SK-N-SH (cell line): ENCODE measurements at regions of chr1 and their contacts with region 1.

Region 1: GRCh38 chr1:197180252-197180878 is 33.9 kb upstream of the ASPM start:
- DNase-seq: peak; percentile 38
- H3K4me3 ChIP-seq: no peak overlapping the region; a peak in 1 of 4 replicates
- H3K27ac ChIP-seq: peak overlapping the region in 1 of 2 experiments; percentile 10; a peak in 2 of 4 replicates
- H3K4me1 ChIP-seq: no peaks in the 10 kb centered on the region; a peak in 1 of 4 replicates
- H3K27me3 ChIP-seq: no peaks in the 10 kb centered on the region
- CTCF ChIP-seq: peak; percentile 84
- EP300 ChIP-seq: no peak
- RAD21 ChIP-seq: peak; percentile 80

Region 2: DNA sequence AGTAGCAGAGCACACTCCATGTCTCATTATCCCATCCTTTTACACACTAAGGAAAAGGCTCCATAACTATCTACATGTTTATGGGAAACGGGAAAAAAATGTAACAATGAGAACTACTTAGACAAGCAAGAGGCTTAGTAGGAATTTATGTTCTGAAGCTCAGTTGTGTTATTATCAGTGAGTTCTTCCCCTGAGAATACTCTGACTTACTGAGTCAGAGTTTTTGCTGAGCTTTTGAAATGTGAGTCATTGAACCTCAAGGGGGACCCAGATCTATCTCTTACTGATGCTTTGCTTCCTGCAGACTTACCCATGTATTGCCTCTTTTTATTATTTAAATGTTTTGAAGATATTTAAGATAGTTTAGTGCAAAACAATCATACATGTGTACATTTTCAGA is 182.9 kb before region 1 on chr1:
- CTCF ChIA-PET with region 1: no interaction called
- POLR2A ChIA-PET with region 1: no interaction called
- DNase-seq: no peak
- H3K4me3 ChIP-seq: no peak overlapping the region
- H3K27ac ChIP-seq: no peak overlapping the region
- H3K4me1 ChIP-seq: peaks cover 0 to under 1% of the 10 kb centered on the region in 2 experiments; a peak in 2 of 4 replicates
- H3K27me3 ChIP-seq: no peaks in the 10 kb centered on the region
- CTCF ChIP-seq: no peak
- EP300 ChIP-seq: no peak
- RAD21 ChIP-seq: no peak

Region 3: GRCh38 chr1:197195100-197195499 is 14.7 kb after region 1 on chr1:
- CTCF ChIA-PET with region 1: interaction called, 10 read pairs
- POLR2A ChIA-PET with region 1: no interaction called
- DNase-seq: no peak
- H3K4me3 ChIP-seq: peak overlapping the region in 1 of 2 experiments; percentile 39; a peak in 2 of 4 replicates
- H3K27ac ChIP-seq: peak overlapping the region in 1 of 2 experiments; percentile 68; a peak in 3 of 4 replicates
- H3K4me1 ChIP-seq: peaks cover 19 to 28% of the 10 kb centered on the region in 2 experiments; a peak in 2 of 4 replicates
- H3K27me3 ChIP-seq: no peaks in the 10 kb centered on the region
- CTCF ChIP-seq: no peak
- EP300 ChIP-seq: no peak
- RAD21 ChIP-seq: no peak

Region 4: DNA sequence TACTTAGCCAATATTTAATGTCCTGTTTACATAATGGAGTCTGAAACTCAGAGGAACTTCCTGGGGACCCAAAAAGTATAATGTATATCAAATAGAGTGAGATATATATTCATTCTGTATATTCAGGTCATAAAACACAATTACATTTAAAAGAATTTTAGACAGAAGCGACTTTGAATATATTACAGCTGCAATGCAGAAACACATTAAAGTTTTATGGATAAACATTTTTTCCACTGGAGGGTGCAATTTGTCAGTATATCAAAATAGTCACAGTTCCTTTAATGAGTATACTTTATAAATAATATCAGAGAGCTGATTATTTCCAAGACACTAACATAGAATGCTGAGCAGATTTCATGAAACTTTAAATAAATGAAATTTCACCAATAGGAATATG is 43.8 kb after region 1 on chr1:
- CTCF ChIA-PET with region 1: interaction called, 14 read pairs
- POLR2A ChIA-PET with region 1: no interaction called
- DNase-seq: peak; percentile 13
- H3K4me3 ChIP-seq: no peak overlapping the region
- H3K27ac ChIP-seq: no peak overlapping the region
- H3K4me1 ChIP-seq: peaks cover 0 to 10% of the 10 kb centered on the region in 2 experiments; a peak in 2 of 4 replicates
- H3K27me3 ChIP-seq: no peaks in the 10 kb centered on the region
- CTCF ChIP-seq: peak; percentile 63
- EP300 ChIP-seq: no peak
- RAD21 ChIP-seq: peak; percentile 52

Region 5: GRCh38 chr1:197314682-197315081 is 134.3 kb after region 1 on chr1:
- CTCF ChIA-PET with region 1: interaction called, 14 read pairs
- POLR2A ChIA-PET with region 1: no interaction called
- DNase-seq: no peak
- H3K4me3 ChIP-seq: no peak overlapping the region
- H3K27ac ChIP-seq: no peak overlapping the region
- H3K4me1 ChIP-seq: no peaks in the 10 kb centered on the region; a peak in 1 of 4 replicates
- H3K27me3 ChIP-seq: no peaks in the 10 kb centered on the region
- CTCF ChIP-seq: peak; percentile 23
- EP300 ChIP-seq: no peak
- RAD21 ChIP-seq: peak; percentile 15; the same call in 1 of the 2 replicates

Region 6: GRCh38 chr1:197327776-197328364 is 147.5 kb after region 1 on chr1:
- CTCF ChIA-PET with region 1: interaction called, 10 read pairs
- POLR2A ChIA-PET with region 1: no interaction called
- DNase-seq: peak; percentile 16
- H3K4me3 ChIP-seq: peak overlapping the region in 1 of 2 experiments; percentile 10; a peak in 1 of 4 replicates
- H3K27ac ChIP-seq: no peak overlapping the region
- H3K4me1 ChIP-seq: no peaks in the 10 kb centered on the region; a peak in 1 of 4 replicates
- H3K27me3 ChIP-seq: no peaks in the 10 kb centered on the region
- CTCF ChIP-seq: peak; percentile 79
- EP300 ChIP-seq: no peak
- RAD21 ChIP-seq: peak; percentile 67

Region 7: GRCh38 chr1:197356723-197357533 is 176.6 kb after region 1 on chr1:
- CTCF ChIA-PET with region 1: interaction called, 99 read pairs
- POLR2A ChIA-PET with region 1: no interaction called
- DNase-seq: peak; percentile 63
- H3K4me3 ChIP-seq: no peak overlapping the region
- H3K27ac ChIP-seq: no peak overlapping the region
- H3K4me1 ChIP-seq: no peaks in the 10 kb centered on the region; a peak in 1 of 4 replicates
- H3K27me3 ChIP-seq: no peaks in the 10 kb centered on the region
- CTCF ChIP-seq: peak; percentile 80
- EP300 ChIP-seq: no peak
- RAD21 ChIP-seq: peak; percentile 93